ENCODE measurements at regions of chr3 and their contacts with region 1.

Region 1: GRCh38 chr3:168467115-168467714 is 371.5 kb upstream of the GOLIM4 start:
- DNase-seq: peak in 1 of 2 experiments; percentile 16
- H3K4me3 ChIP-seq: no peak overlapping the region
- H3K4me3 Mint-ChIP-seq: no peak overlapping the region
- H3K27ac Mint-ChIP-seq: no peak overlapping the region
- H3K4me1 ChIP-seq: no peaks in the 10 kb centered on the region
- H3K4me1 Mint-ChIP-seq: no peaks in the 10 kb centered on the region
- H3K27me3 ChIP-seq: no peaks in the 10 kb centered on the region; the same call in 1 of the 2 replicates
- H3K27me3 Mint-ChIP-seq: peaks cover 1% of the 10 kb centered on the region
- CTCF ChIP-seq: peak in 1 of 2 experiments; percentile 43

Region 2: GRCh38 chr3:168213920-168214319 is 253.3 kb before region 1 on chr3:
- CTCF ChIA-PET with region 1: interaction called, 6 read pairs
- POLR2A ChIA-PET with region 1: no interaction called
- intact Hi-C with region 1: loop called (anchors 1 kb)
- DNase-seq: no peak
- H3K4me3 ChIP-seq: no peak overlapping the region
- H3K4me3 Mint-ChIP-seq: no peak overlapping the region
- H3K27ac Mint-ChIP-seq: no peak overlapping the region
- H3K4me1 ChIP-seq: 0 out of 2 replicates have a peak, but pooled peaks cover 3% of the 10 kb centered on the region
- H3K4me1 Mint-ChIP-seq: no peaks in the 10 kb centered on the region
- H3K27me3 ChIP-seq: no peaks in the 10 kb centered on the region
- H3K27me3 Mint-ChIP-seq: peaks cover 14% of the 10 kb centered on the region
- CTCF ChIP-seq: no peak

Region 3: GRCh38 chr3:168249550-168250414 is 217.4 kb before region 1 on chr3:
- CTCF ChIA-PET with region 1: interaction called, 3 read pairs
- POLR2A ChIA-PET with region 1: no interaction called
- intact Hi-C with region 1: loop called (anchors 1 kb)
- DNase-seq: peak; percentile 68 to 81
- H3K4me3 ChIP-seq: peak overlapping the region; percentile 47
- H3K4me3 Mint-ChIP-seq: peak overlapping the region; percentile 69
- H3K27ac Mint-ChIP-seq: no peak overlapping the region
- H3K4me1 ChIP-seq: peaks cover 5% of the 10 kb centered on the region; the same call in 1 of the 2 replicates
- H3K4me1 Mint-ChIP-seq: peaks cover 8% of the 10 kb centered on the region
- H3K27me3 ChIP-seq: peaks cover 2% of the 10 kb centered on the region
- H3K27me3 Mint-ChIP-seq: peaks cover 19% of the 10 kb centered on the region
- CTCF ChIP-seq: peak; percentile 27 to 63

Region 4: GRCh38 chr3:169348929-169349613 is 881.9 kb after region 1 on chr3:
- CTCF ChIA-PET with region 1: no interaction called
- POLR2A ChIA-PET with region 1: no interaction called
- intact Hi-C with region 1: no loop called
- DNase-seq: no peak
- H3K4me3 ChIP-seq: no peak overlapping the region
- H3K4me3 Mint-ChIP-seq: peak overlapping the region; percentile 55
- H3K27ac Mint-ChIP-seq: peak overlapping the region; percentile 39
- H3K4me1 ChIP-seq: peaks cover 18% of the 10 kb centered on the region
- H3K4me1 Mint-ChIP-seq: peaks cover 2% of the 10 kb centered on the region
- H3K27me3 ChIP-seq: no peaks in the 10 kb centered on the region
- H3K27me3 Mint-ChIP-seq: no peaks in the 10 kb centered on the region
- CTCF ChIP-seq: no peak

Measured in Caco-2 (cell line).